MCF 10A (cell line): ENCODE measurements at regions of chr1 and their contacts with region 1.

Region 1: DNA sequence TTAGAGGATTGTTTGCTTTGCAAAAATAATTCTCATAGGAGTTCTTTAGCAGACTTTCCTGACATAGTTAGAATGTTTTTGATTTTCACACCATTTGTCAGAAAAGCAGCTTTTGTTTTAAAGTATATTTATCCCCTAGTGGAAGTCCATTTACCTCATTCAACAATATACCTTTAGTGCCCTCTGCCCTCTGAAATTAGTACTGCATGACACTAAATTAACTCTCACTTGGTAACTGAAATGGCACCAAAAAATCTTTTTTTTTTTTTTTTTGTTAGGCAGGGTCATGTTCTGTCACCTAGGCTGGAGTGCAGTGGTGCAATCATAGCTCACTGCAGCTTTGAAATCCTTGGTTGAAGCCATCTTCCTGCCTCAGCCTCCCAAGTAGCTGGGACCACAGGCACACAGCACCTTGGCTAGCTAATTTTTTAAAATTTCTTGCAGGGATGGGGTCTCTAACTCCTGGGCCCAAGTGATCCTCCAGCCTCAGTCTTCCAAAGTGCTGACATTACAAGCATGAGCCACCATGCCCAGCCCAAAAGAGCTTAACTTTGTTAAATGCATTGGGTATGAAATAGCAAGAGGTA is 13.6 kb downstream of the LRRC42 start:
- DNase-seq: peak; percentile 49
- H3K4me3 Mint-ChIP-seq: no peak overlapping the region
- H3K27ac Mint-ChIP-seq: no peak overlapping the region
- H3K4me1 Mint-ChIP-seq: peaks cover 20% of the 10 kb centered on the region
- H3K27me3 Mint-ChIP-seq: no peaks in the 10 kb centered on the region
- CTCF ChIP-seq: peak; percentile 46

Region 2: DNA sequence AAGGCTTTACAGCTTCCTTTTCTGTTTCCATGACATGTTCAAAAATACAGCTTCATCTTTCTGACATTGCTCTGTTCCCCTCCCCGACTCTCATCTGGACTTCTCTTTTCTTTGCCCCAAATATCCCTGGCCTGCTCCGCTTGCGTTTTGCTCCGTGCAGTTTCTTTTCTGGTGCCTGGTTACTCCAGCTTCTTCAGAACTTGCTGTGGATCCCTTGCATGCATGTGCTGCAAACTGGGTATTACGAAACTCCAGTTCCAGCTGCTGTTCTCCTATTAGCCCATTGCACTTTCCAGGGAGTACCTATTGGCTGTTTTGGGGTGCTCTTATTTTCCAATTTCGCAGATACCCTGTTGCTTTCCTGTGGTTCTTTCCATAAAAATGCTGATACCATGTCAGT is 111.8 kb before region 1 on chr1:
- CTCF ChIA-PET with region 1: interaction called, 15 read pairs
- POLR2A ChIA-PET with region 1: interaction called, 3 read pairs
- intact Hi-C with region 1: no loop called
- DNase-seq: no peak
- H3K4me3 Mint-ChIP-seq: no peak overlapping the region
- H3K27ac Mint-ChIP-seq: no peak overlapping the region
- H3K4me1 Mint-ChIP-seq: no peaks in the 10 kb centered on the region
- H3K27me3 Mint-ChIP-seq: peaks cover 12% of the 10 kb centered on the region
- CTCF ChIP-seq: no peak

Region 3: DNA sequence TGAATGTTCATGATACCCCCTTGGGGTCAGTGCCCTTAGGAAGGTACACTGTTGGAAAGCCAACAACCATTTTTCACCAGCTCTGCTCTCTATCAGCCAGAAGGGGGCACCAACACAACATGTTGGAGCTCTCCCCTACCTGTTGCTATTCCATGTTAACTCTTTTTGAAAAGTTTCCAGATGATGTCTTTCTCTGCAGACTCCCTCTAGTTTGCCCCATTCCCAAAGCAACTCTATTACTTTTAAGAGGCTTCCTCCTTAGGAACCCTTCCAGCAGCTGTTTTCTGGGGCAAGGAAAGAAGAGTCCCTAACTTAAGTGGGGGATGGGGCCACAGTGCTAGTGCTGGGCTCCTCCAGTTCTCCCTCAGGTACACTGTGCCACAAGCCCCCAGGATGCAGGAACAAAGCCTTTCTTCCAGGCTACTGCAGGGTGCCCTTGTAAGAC is 98.8 kb before region 1 on chr1:
- CTCF ChIA-PET with region 1: interaction called, 154 read pairs
- POLR2A ChIA-PET with region 1: interaction called, 20 read pairs
- intact Hi-C with region 1: loop called (anchors 1 kb)
- DNase-seq: peak; percentile 75
- H3K4me3 Mint-ChIP-seq: no peak overlapping the region
- H3K27ac Mint-ChIP-seq: no peak overlapping the region
- H3K4me1 Mint-ChIP-seq: no peaks in the 10 kb centered on the region
- H3K27me3 Mint-ChIP-seq: no peaks in the 10 kb centered on the region
- CTCF ChIP-seq: peak; percentile 82

Region 4: GRCh38 chr1:53869454-53870117 is 90.2 kb before region 1 on chr1:
- CTCF ChIA-PET with region 1: interaction called, 22 read pairs
- POLR2A ChIA-PET with region 1: interaction called, 4 read pairs
- intact Hi-C with region 1: no loop called
- DNase-seq: no peak
- H3K4me3 Mint-ChIP-seq: no peak overlapping the region
- H3K27ac Mint-ChIP-seq: no peak overlapping the region
- H3K4me1 Mint-ChIP-seq: no peaks in the 10 kb centered on the region
- H3K27me3 Mint-ChIP-seq: no peaks in the 10 kb centered on the region
- CTCF ChIP-seq: no peak

Region 5: DNA sequence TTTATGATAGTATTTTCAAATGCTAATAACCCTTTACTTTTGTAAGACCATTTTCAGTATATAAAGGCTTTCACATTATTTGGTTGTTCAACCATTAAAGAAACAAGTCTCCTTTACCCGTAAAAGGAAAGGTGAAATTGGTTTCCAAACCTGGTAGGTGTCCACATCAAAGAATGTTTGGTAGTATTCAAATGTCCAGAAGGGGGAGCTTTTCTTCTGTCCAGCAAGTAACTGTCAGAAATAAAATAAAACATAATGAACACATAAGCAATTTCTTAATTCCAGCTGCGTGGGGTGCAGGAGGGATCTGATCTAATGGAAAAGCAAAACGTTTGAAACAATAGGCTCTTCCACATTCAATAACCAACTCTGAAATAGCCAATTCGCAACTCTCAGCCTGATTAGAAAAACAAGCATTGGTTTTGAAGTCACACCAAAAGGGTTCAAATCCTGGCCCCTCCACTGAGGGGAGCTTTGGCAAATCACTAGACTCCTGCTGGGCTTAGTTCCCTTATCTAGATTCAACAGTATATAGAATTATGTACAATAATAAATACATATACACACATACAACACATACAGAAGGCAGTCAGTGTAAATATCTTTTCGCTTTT is 81.2 kb before region 1 on chr1:
- CTCF ChIA-PET with region 1: interaction called, 151 read pairs
- POLR2A ChIA-PET with region 1: interaction called, 11 read pairs
- intact Hi-C with region 1: loop called (anchors 1 kb)
- DNase-seq: peak; percentile 59
- H3K4me3 Mint-ChIP-seq: no peak overlapping the region
- H3K27ac Mint-ChIP-seq: no peak overlapping the region
- H3K4me1 Mint-ChIP-seq: no peaks in the 10 kb centered on the region
- H3K27me3 Mint-ChIP-seq: no peaks in the 10 kb centered on the region
- CTCF ChIP-seq: peak; percentile 63

Region 6: DNA sequence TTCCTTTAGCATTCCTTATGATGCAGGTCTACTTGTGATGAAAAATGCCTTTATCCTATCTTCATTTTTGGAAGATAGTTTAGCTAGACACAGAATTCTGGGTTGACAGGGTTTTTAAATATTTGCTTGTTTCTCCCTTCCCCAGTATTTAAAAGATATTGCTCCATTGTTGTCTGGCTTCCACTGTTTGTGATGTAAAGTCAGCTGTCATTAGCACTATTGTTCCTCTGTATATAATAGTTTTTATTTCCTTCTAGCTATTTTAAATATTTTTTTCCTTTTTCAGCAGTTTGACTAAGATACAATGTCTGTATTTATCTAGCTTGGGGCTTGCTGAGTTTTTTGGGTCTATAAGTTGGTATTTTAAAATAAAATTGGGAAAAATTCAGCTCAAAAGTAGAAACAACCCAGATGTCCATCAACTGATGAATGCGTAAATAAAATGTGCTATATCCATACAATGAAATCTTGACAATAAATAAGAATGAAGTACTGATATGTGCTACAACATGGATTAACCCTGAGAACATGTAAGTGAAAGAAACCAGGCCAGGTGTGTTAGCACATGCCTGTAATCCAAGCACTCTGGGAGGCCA is 25.5 kb before region 1 on chr1:
- CTCF ChIA-PET with region 1: no interaction called
- POLR2A ChIA-PET with region 1: interaction called, 10 read pairs
- intact Hi-C with region 1: no loop called
- DNase-seq: no peak
- H3K4me3 Mint-ChIP-seq: no peak overlapping the region
- H3K27ac Mint-ChIP-seq: no peak overlapping the region
- H3K4me1 Mint-ChIP-seq: peaks cover 9% of the 10 kb centered on the region
- H3K27me3 Mint-ChIP-seq: no peaks in the 10 kb centered on the region
- CTCF ChIP-seq: no peak

Region 7: GRCh38 chr1:53971718-53972117 is 12.0 kb after region 1 on chr1:
- CTCF ChIA-PET with region 1: interaction called, 19 read pairs
- POLR2A ChIA-PET with region 1: interaction called, 5 read pairs
- intact Hi-C with region 1: no loop called
- DNase-seq: no peak
- H3K4me3 Mint-ChIP-seq: no peak overlapping the region
- H3K27ac Mint-ChIP-seq: no peak overlapping the region
- H3K4me1 Mint-ChIP-seq: no peaks in the 10 kb centered on the region
- H3K27me3 Mint-ChIP-seq: no peaks in the 10 kb centered on the region
- CTCF ChIP-seq: no peak

Region 8: DNA sequence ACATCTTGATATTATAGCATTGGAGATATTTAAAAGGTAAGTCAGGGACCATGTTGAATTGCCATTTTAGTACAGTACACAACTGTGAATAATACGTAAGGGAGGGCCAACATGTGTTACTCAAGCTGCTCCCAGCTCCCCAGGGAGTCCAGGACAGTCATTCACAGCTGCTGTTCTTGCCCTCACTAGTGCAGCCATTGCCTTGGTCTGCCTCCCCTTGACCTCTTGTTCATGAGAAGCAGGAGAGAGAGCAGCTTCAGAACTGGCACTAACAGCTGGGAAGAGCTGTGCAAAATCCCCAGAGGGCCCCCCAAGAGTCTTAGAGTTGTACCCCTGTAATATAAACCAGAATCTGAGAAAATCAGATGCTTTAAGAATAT is 110.0 kb after region 1 on chr1:
- CTCF ChIA-PET with region 1: no interaction called
- POLR2A ChIA-PET with region 1: no interaction called
- intact Hi-C with region 1: no loop called
- DNase-seq: peak; percentile 9
- H3K4me3 Mint-ChIP-seq: no peak overlapping the region
- H3K27ac Mint-ChIP-seq: no peak overlapping the region
- H3K4me1 Mint-ChIP-seq: no peaks in the 10 kb centered on the region
- H3K27me3 Mint-ChIP-seq: no peaks in the 10 kb centered on the region
- CTCF ChIP-seq: no peak